Uterus (tissue), 4 donors: ENCODE measurements at regions of chr1 and their contacts with region 1.

Region 1: DNA sequence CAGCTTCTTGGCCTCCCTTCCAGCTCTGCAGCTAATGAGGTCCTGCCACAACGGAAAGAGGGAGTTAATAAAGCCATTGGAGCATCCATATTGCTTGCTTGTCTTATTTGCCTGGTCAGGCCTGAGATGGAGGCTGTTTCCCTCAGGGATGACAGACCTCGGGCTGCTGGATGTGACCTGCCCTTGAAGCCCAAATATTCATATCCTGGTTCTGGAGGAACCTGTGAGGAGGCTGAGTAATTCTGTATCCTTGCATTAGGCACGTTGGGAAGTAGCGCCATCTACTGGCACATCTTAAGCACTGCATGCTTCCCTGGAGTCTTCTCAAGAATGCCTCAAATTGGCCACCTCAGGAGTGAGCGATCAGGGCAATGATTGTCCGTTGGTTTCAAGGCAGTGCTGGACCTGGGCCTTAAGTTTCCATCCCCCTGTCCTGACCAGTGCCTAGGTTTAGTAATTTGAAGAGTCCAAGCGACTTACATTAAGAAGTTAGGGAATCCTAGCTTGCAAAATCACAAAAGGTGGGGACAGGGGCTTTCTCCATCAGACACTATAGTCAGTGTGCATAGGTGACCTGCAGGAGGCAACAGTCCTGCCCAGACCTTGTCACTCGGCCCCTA is 13.8 kb upstream of the NASP start:
- DNase-seq: peak; percentile 69 to 78
- H3K4me3 ChIP-seq: no peak overlapping the region
- H3K27ac ChIP-seq: peak overlapping the region in 1 of 2 donors; percentile 24
- H3K4me1 ChIP-seq: no peaks in the 10 kb centered on the region
- H3K27me3 ChIP-seq: no peaks in the 10 kb centered on the region
- CTCF ChIP-seq: peak; percentile 93 to 96 (median 96)
- POLR2A ChIP-seq: no peak

Region 2: DNA sequence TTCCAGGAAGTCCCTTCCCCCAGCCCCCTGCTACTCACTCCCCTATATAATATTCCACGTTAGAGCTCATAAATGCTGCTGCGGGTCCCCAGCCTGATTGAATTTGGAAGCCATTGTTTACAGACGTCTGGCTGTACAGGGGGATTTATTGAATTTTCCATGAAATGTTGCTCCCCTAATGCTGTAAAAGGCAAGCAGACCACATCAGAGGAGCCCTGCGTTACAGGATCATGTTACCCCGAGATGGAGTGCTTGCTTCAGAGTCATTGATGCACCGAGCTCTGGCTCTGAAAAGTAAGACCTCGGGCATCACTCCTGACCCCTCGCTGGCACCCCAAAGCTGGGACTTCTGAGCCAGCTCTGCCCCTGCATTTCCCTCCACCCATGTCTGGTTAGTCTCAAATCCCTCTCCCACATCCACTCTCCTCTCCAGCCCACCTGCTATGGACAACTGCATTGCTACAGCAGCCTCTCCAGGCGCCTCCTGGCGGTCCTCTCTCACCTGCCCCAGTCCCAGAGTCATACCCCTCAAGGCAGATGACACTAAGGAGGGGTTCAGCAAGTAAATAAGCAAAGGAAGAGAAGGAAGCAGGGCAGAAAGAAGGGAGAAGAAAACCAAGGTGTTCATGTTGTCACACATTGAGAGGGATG is 1023.5 kb before region 1 on chr1:
- intact Hi-C with region 1: no loop called
- DNase-seq: no peak
- H3K4me3 ChIP-seq: no peak overlapping the region
- H3K27ac ChIP-seq: no peak overlapping the region
- H3K4me1 ChIP-seq: no peaks in the 10 kb centered on the region
- H3K27me3 ChIP-seq: no peaks in the 10 kb centered on the region
- CTCF ChIP-seq: no peak
- POLR2A ChIP-seq: no peak

Region 3: DNA sequence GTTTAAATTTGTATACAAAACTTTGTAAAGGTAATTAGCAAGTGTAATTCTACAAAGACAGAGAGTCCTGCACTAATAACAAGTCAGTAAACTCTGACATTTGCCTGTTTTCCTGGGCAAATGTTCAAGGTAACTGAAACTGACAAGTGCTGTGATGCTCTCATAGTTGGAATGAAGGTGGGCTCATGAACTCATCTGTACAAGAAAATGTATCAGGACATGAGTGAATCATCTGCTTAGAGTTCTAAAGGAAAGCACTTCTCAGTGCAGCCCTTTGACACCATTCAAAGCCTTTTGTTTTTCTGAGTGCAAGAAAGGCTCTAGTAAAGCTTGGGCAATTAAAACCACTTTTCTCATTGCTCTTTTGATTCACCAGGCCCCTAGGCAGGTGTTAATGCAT is 466.5 kb before region 1 on chr1:
- intact Hi-C with region 1: no loop called
- DNase-seq: no peak
- H3K4me3 ChIP-seq: no peak overlapping the region
- H3K27ac ChIP-seq: no peak overlapping the region
- H3K4me1 ChIP-seq: no peaks in the 10 kb centered on the region
- H3K27me3 ChIP-seq: no peaks in the 10 kb centered on the region
- CTCF ChIP-seq: no peak
- POLR2A ChIP-seq: no peak

Region 4: DNA sequence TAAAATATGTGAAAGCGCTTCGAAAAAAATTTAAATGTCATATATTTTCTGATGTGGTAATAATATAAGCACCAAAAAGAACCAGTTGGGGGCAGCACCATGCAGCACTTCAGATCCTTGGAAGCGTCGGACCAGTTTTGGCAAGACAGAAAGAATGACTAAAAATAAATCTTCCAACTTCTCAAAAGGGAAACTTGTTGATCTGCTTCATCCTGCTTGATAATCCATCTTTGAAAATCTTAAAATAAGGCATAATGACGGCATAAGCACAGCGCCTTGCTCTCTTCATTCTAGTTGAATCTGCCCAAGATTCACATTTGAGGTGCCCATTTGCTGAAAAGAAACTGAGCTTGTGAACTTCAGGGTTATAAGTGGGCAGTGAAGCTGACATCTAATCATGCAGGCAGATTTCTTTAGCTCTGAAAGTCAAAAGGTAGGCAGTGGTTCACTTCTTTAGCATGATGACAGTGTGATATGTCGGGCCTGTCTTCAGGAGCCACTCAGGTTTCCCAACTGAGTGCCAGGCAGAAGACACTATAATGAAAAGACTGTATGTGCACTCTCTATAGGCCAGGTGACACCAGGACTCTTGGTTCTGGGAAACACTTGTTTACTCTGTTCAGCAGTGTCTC is 210.1 kb before region 1 on chr1:
- intact Hi-C with region 1: loop called (anchors 10 kb)
- DNase-seq: peak; percentile 64 to 74
- H3K4me3 ChIP-seq: no peak overlapping the region
- H3K27ac ChIP-seq: peak overlapping the region; percentile 66 to 88
- H3K4me1 ChIP-seq: peaks cover 0 to 9% of the 10 kb centered on the region in 2 donors
- H3K27me3 ChIP-seq: no peaks in the 10 kb centered on the region
- CTCF ChIP-seq: peak; percentile 66 to 82 (median 72)
- POLR2A ChIP-seq: no peak

Region 5: GRCh38 chr1:45512641-45513054 is 57.4 kb before region 1 on chr1:
- intact Hi-C with region 1: loop called (anchors 10 kb)
- DNase-seq: peak in 1 of 2 donors; percentile 38
- H3K4me3 ChIP-seq: no peak overlapping the region
- H3K27ac ChIP-seq: no peak overlapping the region
- H3K4me1 ChIP-seq: no peaks in the 10 kb centered on the region
- H3K27me3 ChIP-seq: no peaks in the 10 kb centered on the region
- CTCF ChIP-seq: peak; percentile 42 to 54 (median 49)
- POLR2A ChIP-seq: no peak